A549 (cell line): ENCODE measurements at regions of chr2 and their contacts with region 1.

Region 1: DNA sequence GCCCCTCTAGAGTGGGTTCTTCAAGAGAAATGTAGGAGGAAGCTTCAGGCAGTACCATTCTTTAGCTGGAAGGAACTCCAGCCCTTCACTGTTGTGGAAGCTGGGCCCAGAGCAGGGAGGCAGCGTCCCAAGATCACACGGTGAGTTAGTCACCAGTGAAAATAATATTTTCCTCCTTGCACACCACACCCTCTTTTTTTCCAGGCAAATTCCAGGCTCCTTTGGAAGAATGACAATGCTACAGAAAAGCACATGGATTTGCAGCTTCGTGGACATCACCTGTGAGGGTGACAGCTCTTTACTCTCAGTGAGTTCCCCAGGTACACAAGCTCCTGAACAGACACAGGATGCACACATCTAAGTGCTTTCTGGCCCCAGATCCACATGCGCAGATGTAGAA is 157.1 kb downstream of the COL6A3 start:
- DNase-seq: no peak
- ATAC-seq: peak; percentile 39 to 43; a peak in 2 of 6 replicates
- H3K4me3 ChIP-seq: no peak overlapping the region
- H3K27ac ChIP-seq: peak overlapping the region; percentile 44 to 65
- H3K4me1 ChIP-seq: peaks cover 42% of the 10 kb centered on the region
- CTCF ChIP-seq: no peak
- EP300 ChIP-seq: no peak
- POLR2A ChIP-seq: no peak
- RAD21 ChIP-seq: no peak

Region 2: DNA sequence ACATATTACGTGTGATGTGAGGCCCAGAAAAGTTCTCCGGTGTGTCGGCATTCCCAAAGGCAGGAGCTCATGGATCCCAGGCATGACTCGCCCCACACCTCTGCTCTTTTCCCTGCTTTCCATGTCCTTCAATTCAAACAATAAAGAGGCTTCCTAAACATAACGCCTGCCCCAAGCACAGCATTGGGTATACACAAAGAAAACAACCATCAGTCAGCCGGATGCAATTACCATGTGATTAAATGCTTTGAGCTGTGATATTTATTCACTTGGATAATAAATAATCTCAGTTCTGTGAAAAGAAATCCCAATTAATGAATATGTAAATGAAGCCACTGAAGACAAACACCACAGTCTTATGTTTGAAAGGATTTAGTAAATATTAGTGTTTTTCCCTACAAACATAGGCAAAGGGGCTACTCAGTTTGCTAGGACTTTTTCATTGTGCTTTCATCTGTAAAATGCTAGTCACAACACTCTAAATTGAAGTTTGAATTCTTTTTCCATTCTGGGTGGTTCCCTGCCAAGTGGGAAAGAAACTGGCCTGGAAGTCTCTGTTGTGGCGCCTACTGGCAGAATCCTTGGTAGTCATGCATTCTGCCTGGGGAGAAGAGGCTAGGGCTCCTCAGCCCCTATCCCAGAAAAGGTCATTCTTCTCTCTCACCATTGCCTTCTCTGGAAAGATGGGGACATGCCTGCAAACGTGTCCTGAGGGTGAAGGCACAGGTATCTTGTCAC is 12.4 kb after region 1 on chr2:
- CTCF ChIA-PET with region 1: interaction called, 12 read pairs
- POLR2A ChIA-PET with region 1: no interaction called
- DNase-seq: no peak
- ATAC-seq: no peak
- H3K4me3 ChIP-seq: no peak overlapping the region
- H3K27ac ChIP-seq: no peak overlapping the region
- H3K4me1 ChIP-seq: peaks cover 8% of the 10 kb centered on the region; the same call in 2 of the 3 replicates
- CTCF ChIP-seq: no peak
- EP300 ChIP-seq: no peak
- POLR2A ChIP-seq: no peak
- RAD21 ChIP-seq: no peak

Region 3: GRCh38 chr2:237304763-237305514 is 48.1 kb after region 1 on chr2:
- CTCF ChIA-PET with region 1: no interaction called
- POLR2A ChIA-PET with region 1: no interaction called
- DNase-seq: no peak
- ATAC-seq: no peak
- H3K4me3 ChIP-seq: no peak overlapping the region
- H3K27ac ChIP-seq: no peak overlapping the region
- H3K4me1 ChIP-seq: no peaks in the 10 kb centered on the region
- CTCF ChIP-seq: no peak
- EP300 ChIP-seq: no peak
- POLR2A ChIP-seq: no peak
- RAD21 ChIP-seq: no peak

Region 4: GRCh38 chr2:237408335-237409000 is 151.6 kb after region 1 on chr2:
- CTCF ChIA-PET with region 1: interaction called, 10 read pairs
- POLR2A ChIA-PET with region 1: no interaction called
- DNase-seq: no peak
- ATAC-seq: no peak
- H3K4me3 ChIP-seq: no peak overlapping the region
- H3K27ac ChIP-seq: no peak overlapping the region
- H3K4me1 ChIP-seq: 0 out of 3 replicates have a peak, but pooled peaks cover 5% of the 10 kb centered on the region
- CTCF ChIP-seq: no peak
- EP300 ChIP-seq: no peak
- POLR2A ChIP-seq: no peak
- RAD21 ChIP-seq: no peak